GM12878 (cell line): ENCODE measurements at regions of chr12 and their contacts with region 1.

Region 1: DNA sequence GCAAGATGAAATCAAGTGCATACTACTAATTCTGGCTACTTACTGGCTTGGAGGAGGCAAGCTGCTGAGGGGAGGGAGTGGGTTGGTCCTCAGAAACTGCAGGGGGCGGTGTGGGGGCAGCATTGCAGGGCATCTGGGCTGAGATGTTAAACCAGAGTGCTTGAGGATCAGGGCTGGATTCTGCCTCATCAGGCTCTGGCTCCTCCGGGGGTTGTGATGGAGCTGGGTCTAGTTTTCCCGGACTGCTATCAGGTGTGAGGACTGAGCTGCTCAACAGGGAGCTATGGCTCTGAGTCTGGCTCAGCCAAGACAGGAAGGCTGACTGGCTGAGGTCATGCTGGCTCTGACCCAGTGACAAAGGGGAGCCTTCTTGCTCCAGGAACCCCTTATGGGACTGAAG is 28.6 kb downstream of the BAZ2A start:
- DNase-seq: no peak
- ATAC-seq: peak; percentile 73
- H3K4me3 ChIP-seq: no peak overlapping the region
- H3K27ac ChIP-seq: no peak overlapping the region
- H3K4me1 ChIP-seq: no peaks in the 10 kb centered on the region; the same call in 1 of the 2 replicates
- H3K27me3 ChIP-seq: no peaks in the 10 kb centered on the region
- CTCF ChIP-seq: peak; percentile 36 to 46 (median 39); a peak in 4 of 6 replicates
- EP300 ChIP-seq: no peak
- POLR2A ChIP-seq: no peak
- RAD21 ChIP-seq: peak; percentile 37; the same call in 1 of the 2 replicates

Region 2: GRCh38 chr12:56630160-56630632 is 28.7 kb after region 1 on chr12 and contains the start of gene BAZ2A:
- CTCF ChIA-PET with region 1: interaction called, 50 read pairs
- POLR2A ChIA-PET with region 1: interaction called, 10 read pairs
- RAD21 ChIA-PET with region 1: interaction called, 21 read pairs
- SMC1A ChIA-PET with region 1: interaction called, 5 read pairs
- in situ Hi-C with region 1: no loop called
- intact Hi-C with region 1: no loop called
- DNase-seq: no peak
- ATAC-seq: peak; percentile 79
- H3K4me3 ChIP-seq: peak within 1 kb of the TSS; percentile 100
- H3K27ac ChIP-seq: peak within 1 kb of the TSS; percentile 90
- H3K4me1 ChIP-seq: peaks cover 47% of the 10 kb centered on the region
- H3K27me3 ChIP-seq: no peaks in the 10 kb centered on the region
- CTCF ChIP-seq: no peak
- EP300 ChIP-seq: peak in 1 of 2 experiments; percentile 40; a peak in 2 of 4 replicates
- POLR2A ChIP-seq: peak; percentile 74
- RAD21 ChIP-seq: no peak
- polyA plus RNA-seq, gene BAZ2A: 4.8 to 14.6 TPM